ENCODE measurements at regions of chr6 and their contacts with region 1.

Region 1: GRCh38 chr6:168865-169455 is 123.3 kb upstream of the DUSP22 start:
- DNase-seq: no peak
- ATAC-seq: peak; percentile 71
- H3K4me3 ChIP-seq: no peak overlapping the region
- H3K27ac ChIP-seq: no peak overlapping the region
- H3K4me1 ChIP-seq: no peaks in the 10 kb centered on the region
- H3K27me3 ChIP-seq: no peaks in the 10 kb centered on the region
- CTCF ChIP-seq: peak; percentile 43 to 61 (median 56); a peak in 5 of 6 replicates
- EP300 ChIP-seq: no peak
- POLR2A ChIP-seq: no peak
- RAD21 ChIP-seq: peak; percentile 79

Region 2: GRCh38 chr6:152431-152830 is 16.5 kb before region 1 on chr6:
- CTCF ChIA-PET with region 1: interaction called, 107 read pairs
- POLR2A ChIA-PET with region 1: interaction called, 9 read pairs
- RAD21 ChIA-PET with region 1: interaction called, 24 read pairs
- SMC1A ChIA-PET with region 1: interaction called, 39 read pairs
- in situ Hi-C with region 1: no loop called
- intact Hi-C with region 1: no loop called
- DNase-seq: no peak
- ATAC-seq: no peak
- H3K4me3 ChIP-seq: no peak overlapping the region
- H3K27ac ChIP-seq: no peak overlapping the region; the same call in 1 of the 2 replicates
- H3K4me1 ChIP-seq: peaks cover 55% of the 10 kb centered on the region
- H3K27me3 ChIP-seq: no peaks in the 10 kb centered on the region
- CTCF ChIP-seq: no peak
- EP300 ChIP-seq: no peak
- POLR2A ChIP-seq: no peak
- RAD21 ChIP-seq: no peak

Region 3: DNA sequence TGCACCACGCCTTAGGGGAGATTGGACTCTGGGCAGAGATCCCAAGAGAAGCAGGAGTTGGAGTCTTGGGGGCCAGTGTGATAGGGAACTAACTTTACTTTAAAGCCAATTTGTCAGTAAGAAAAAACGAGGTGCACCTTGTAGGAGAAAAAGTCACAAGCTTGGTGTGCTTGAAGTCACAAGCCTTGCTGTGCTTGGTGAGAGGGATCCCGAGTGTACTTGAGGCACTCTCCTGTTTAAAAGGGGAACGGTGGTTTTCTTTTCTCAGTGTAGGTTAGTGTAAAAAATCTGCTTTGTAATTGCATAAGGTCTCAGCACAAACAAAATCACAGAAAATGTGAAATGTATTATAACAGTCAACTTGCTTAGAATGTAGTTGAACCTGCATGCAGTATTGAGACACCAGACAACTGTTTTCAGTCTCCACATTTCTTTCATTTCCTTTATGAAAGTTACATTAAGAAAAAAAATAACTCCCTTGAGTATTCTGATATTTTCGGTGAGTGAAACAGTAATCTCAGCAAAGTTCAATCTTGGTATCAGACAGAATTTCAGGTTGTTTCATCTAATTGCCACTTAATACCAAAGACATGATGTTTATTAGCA is 12.2 kb after region 1 on chr6:
- CTCF ChIA-PET with region 1: interaction called, 15 read pairs
- POLR2A ChIA-PET with region 1: no interaction called
- RAD21 ChIA-PET with region 1: interaction called, 3 read pairs
- SMC1A ChIA-PET with region 1: interaction called, 3 read pairs
- in situ Hi-C with region 1: no loop called
- intact Hi-C with region 1: no loop called
- DNase-seq: peak; percentile 65
- ATAC-seq: peak; percentile 86
- H3K4me3 ChIP-seq: peak overlapping the region; percentile 19
- H3K27ac ChIP-seq: peak overlapping the region; percentile 82
- H3K4me1 ChIP-seq: peaks cover 29% of the 10 kb centered on the region
- H3K27me3 ChIP-seq: no peaks in the 10 kb centered on the region; a peak in 1 of 4 replicates
- CTCF ChIP-seq: no peak
- EP300 ChIP-seq: peak in 1 of 2 experiments; percentile 65; a peak in 1 of 4 replicates
- POLR2A ChIP-seq: no peak
- RAD21 ChIP-seq: no peak

Region 4: GRCh38 chr6:453152-453551 is 284.2 kb after region 1 on chr6:
- CTCF ChIA-PET with region 1: no interaction called
- POLR2A ChIA-PET with region 1: no interaction called
- RAD21 ChIA-PET with region 1: no interaction called
- SMC1A ChIA-PET with region 1: no interaction called
- in situ Hi-C with region 1: no loop called
- intact Hi-C with region 1: no loop called
- DNase-seq: no peak
- ATAC-seq: no peak
- H3K4me3 ChIP-seq: no peak overlapping the region
- H3K27ac ChIP-seq: no peak overlapping the region
- H3K4me1 ChIP-seq: no peaks in the 10 kb centered on the region
- H3K27me3 ChIP-seq: 0 out of 4 replicates have a peak, but pooled peaks cover 0 to 5% of the 10 kb centered on the region in 2 experiments
- CTCF ChIP-seq: no peak
- EP300 ChIP-seq: no peak
- POLR2A ChIP-seq: no peak
- RAD21 ChIP-seq: no peak

Measured in GM12878 (cell line).